Aorta (tissue), 5 donors: ENCODE measurements at regions of chr6 and their contacts with region 1.

Region 1: GRCh38 chr6:35146453-35146852 is 5.3 kb upstream of the TCP11 start:
- DNase-seq: peak; percentile 67 to 86
- ATAC-seq: peak; percentile 80
- H3K4me3 ChIP-seq: no peak overlapping the region
- H3K27ac ChIP-seq: no peak overlapping the region
- H3K4me1 ChIP-seq: peaks cover 7 to 11% of the 10 kb centered on the region in 2 donors
- H3K27me3 ChIP-seq: no peaks in the 10 kb centered on the region

Region 2: GRCh38 chr6:35185302-35185681 is 38.8 kb after region 1 on chr6:
- intact Hi-C with region 1: loop called (anchors 5 kb)
- DNase-seq: peak; percentile 72 to 78
- ATAC-seq: no peak
- H3K4me3 ChIP-seq: no peak overlapping the region
- H3K27ac ChIP-seq: peak overlapping the region; percentile 36 to 92
- H3K4me1 ChIP-seq: peaks cover 2 to 4% of the 10 kb centered on the region in 2 donors
- H3K27me3 ChIP-seq: no peaks in the 10 kb centered on the region

Region 3: GRCh38 chr6:35202066-35202546 is 55.7 kb after region 1 on chr6:
- intact Hi-C with region 1: loop called (anchors 1 to 2 kb)
- DNase-seq: no peak
- ATAC-seq: no peak
- H3K4me3 ChIP-seq: no peak overlapping the region
- H3K27ac ChIP-seq: no peak overlapping the region
- H3K4me1 ChIP-seq: no peaks in the 10 kb centered on the region
- H3K27me3 ChIP-seq: no peaks in the 10 kb centered on the region

Region 4: DNA sequence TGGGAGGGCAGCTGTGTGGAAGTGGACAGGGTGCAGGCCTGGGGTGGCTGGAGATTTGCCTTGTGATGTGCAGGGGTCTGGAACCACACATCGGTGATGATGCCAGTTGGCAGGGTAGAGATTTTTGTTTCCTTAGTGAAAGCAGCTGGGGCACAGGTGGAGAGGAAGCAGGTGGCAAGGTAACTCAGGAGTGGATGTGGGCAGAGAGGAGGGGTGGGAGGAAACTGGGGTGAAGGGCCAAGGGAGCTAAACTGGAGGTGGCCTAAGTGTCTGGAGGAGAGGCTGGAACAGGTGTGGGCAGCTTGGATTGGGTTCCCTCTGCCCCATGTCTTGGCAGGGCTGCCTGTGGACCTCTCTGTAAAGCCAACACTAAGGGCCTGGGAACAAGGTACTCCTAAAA is 62.6 kb after region 1 on chr6:
- intact Hi-C with region 1: loop called (anchors 1 to 2 kb)
- DNase-seq: no peak
- ATAC-seq: no peak
- H3K4me3 ChIP-seq: no peak overlapping the region
- H3K27ac ChIP-seq: no peak overlapping the region
- H3K4me1 ChIP-seq: no peaks in the 10 kb centered on the region
- H3K27me3 ChIP-seq: no peaks in the 10 kb centered on the region

Region 5: GRCh38 chr6:35240840-35241801 is 94.7 kb after region 1 on chr6:
- intact Hi-C with region 1: loop called (anchors 1 kb)
- DNase-seq: peak; percentile 72 to 89
- ATAC-seq: peak; percentile 69
- H3K4me3 ChIP-seq: no peak overlapping the region
- H3K27ac ChIP-seq: peak overlapping the region in 1 of 2 donors; percentile 0
- H3K4me1 ChIP-seq: peaks cover 0 to 8% of the 10 kb centered on the region in 2 donors
- H3K27me3 ChIP-seq: no peaks in the 10 kb centered on the region

Region 6: GRCh38 chr6:35297601-35298481 is 151.4 kb after region 1 on chr6 and contains the start of gene DEF6:
- intact Hi-C with region 1: no loop called
- DNase-seq: peak; percentile 87 to 89
- ATAC-seq: peak; percentile 88
- H3K4me3 ChIP-seq: no peak within 1 kb of the TSS
- H3K27ac ChIP-seq: no peak within 1 kb of the TSS
- H3K4me1 ChIP-seq: no peaks in the 10 kb centered on the region
- H3K27me3 ChIP-seq: no peaks in the 10 kb centered on the region
- total RNA-seq, gene DEF6: 9.9 to 13.0 TPM